A549 (cell line): ENCODE measurements at regions of chrX and their contacts with region 1.

Region 1: DNA sequence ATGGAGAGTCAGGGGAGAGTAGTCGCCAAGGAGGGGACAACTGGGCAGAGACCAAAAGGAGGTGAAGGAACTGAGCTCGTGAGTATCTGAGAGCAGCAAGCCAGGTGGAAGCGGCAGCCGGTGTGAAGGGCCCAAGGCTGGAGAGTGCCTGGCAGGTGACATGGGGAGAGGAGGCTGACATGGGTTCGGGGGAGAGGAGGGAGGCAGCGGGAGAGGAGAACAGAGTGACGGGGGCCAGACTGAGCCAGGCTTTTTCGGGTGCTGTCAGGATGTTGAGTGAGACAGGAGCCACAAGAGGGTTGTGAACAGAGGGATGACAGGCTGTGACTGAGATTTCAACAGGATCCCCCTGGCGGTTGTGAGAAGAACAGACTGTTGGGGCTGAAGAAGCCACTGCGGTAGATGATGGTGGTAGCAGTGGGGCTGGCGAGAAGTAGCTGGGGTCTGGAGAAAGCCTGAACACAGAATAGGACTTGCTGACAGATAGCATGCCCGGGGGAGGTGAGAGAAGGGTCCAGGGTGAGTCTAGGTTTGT is 5.7 kb downstream of the ELK1 start:
- DNase-seq: peak; percentile 57 to 59
- ATAC-seq: peak; percentile 94
- H3K4me3 ChIP-seq: no peak overlapping the region
- H3K27ac ChIP-seq: no peak overlapping the region
- H3K4me1 ChIP-seq: peaks cover 13% of the 10 kb centered on the region
- CTCF ChIP-seq: peak; percentile 29; the same call in 2 of the 3 replicates
- EP300 ChIP-seq: no peak
- POLR2A ChIP-seq: no peak
- RAD21 ChIP-seq: peak; percentile 20 to 37; a peak in 1 of 5 replicates

Region 2: DNA sequence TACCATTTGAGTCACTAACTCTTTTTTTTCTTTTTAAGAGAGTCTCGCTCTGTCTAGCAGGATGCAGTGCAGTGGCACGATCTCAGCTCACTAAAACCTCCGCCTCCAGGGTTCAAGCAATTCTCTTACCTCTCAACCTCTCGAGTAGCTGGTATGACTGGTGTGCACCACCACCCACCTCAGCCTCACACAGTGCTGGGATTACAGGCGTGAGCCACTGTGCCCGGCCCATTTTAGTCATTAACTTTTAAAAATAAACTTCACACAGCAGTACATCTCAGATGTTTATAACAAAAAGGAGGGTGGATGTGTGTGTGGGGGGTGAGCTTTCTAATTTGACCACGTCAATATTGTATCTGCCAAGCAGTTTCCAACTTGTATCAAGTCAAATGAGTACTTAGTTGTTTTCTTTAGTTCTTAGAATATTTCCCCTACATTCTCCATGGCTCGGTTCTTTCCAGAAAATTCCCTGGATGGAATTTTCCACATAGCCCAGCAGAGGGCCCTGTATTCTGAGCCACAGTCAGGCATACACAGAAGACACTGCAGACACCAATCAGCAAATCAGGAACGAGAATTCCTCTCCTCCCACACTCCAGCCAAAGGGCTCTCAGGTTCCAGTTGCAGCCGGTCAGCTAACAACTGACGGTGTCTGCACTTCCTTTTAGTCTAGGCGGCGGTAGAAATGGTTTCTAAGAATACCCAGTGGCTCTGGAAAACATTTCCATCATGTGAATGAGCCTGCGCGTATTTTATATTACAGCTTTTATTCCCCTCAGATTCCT is 103.7 kb before region 1 on chrX:
- CTCF ChIA-PET with region 1: interaction called, 18 read pairs
- POLR2A ChIA-PET with region 1: no interaction called
- DNase-seq: peak; percentile 90 to 91
- ATAC-seq: peak; percentile 100
- H3K4me3 ChIP-seq: no peak overlapping the region
- H3K27ac ChIP-seq: peak overlapping the region; percentile 37 to 72; a peak in 4 of 6 replicates
- H3K4me1 ChIP-seq: no peaks in the 10 kb centered on the region
- CTCF ChIP-seq: peak; percentile 54
- EP300 ChIP-seq: no peak
- POLR2A ChIP-seq: peak; percentile 33; the same call in 1 of the 2 replicates
- RAD21 ChIP-seq: peak; percentile 50 to 62

Region 3: GRCh38 chrX:47623540-47624027 is 21.0 kb before region 1 on chrX:
- CTCF ChIA-PET with region 1: interaction called, 19 read pairs
- POLR2A ChIA-PET with region 1: no interaction called
- DNase-seq: peak; percentile 66 to 74
- ATAC-seq: peak; percentile 78 to 92
- H3K4me3 ChIP-seq: peak overlapping the region; percentile 34
- H3K27ac ChIP-seq: no peak overlapping the region
- H3K4me1 ChIP-seq: no peaks in the 10 kb centered on the region
- CTCF ChIP-seq: no peak
- EP300 ChIP-seq: no peak
- POLR2A ChIP-seq: no peak
- RAD21 ChIP-seq: no peak

Region 4: GRCh38 chrX:47629419-47630200 is 15.0 kb before region 1 on chrX and contains the start of gene CFP:
- CTCF ChIA-PET with region 1: interaction called, 19 read pairs
- POLR2A ChIA-PET with region 1: no interaction called
- DNase-seq: no peak
- ATAC-seq: no peak
- H3K4me3 ChIP-seq: no peak within 1 kb of the TSS
- H3K27ac ChIP-seq: no peak within 1 kb of the TSS
- H3K4me1 ChIP-seq: no peaks in the 10 kb centered on the region
- CTCF ChIP-seq: no peak
- EP300 ChIP-seq: no peak
- POLR2A ChIP-seq: no peak
- RAD21 ChIP-seq: no peak; a peak in 1 of 5 replicates
- polyA plus RNA-seq, gene CFP: 0.14 and 0.15 TPM in 2 replicates

Region 5: DNA sequence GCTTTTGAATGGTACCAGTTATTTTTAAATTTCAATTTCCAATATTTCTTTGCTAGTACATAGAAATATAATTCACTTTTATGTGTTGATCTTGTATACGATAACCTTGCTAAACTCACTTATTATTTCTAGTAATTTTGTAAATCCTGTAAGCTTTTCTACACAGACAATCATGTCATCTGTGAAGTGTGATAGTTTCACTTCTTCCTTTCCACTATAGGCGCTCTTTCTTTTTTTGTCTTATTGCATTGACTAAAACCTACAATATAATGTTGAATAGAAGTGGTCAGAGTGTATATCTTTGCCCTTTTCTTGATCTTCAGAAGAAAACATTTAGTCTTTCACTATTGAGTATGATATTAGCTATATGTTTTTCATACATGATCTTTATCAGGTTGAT is 282.6 kb after region 1 on chrX:
- CTCF ChIA-PET with region 1: no interaction called
- POLR2A ChIA-PET with region 1: no interaction called
- DNase-seq: no peak
- ATAC-seq: no peak
- H3K4me3 ChIP-seq: no peak overlapping the region
- H3K27ac ChIP-seq: no peak overlapping the region
- H3K4me1 ChIP-seq: no peaks in the 10 kb centered on the region
- CTCF ChIP-seq: no peak
- EP300 ChIP-seq: no peak
- POLR2A ChIP-seq: no peak
- RAD21 ChIP-seq: no peak